PC-9 (cell line): ENCODE measurements at regions of chr6 and their contacts with region 1.

Region 1: DNA sequence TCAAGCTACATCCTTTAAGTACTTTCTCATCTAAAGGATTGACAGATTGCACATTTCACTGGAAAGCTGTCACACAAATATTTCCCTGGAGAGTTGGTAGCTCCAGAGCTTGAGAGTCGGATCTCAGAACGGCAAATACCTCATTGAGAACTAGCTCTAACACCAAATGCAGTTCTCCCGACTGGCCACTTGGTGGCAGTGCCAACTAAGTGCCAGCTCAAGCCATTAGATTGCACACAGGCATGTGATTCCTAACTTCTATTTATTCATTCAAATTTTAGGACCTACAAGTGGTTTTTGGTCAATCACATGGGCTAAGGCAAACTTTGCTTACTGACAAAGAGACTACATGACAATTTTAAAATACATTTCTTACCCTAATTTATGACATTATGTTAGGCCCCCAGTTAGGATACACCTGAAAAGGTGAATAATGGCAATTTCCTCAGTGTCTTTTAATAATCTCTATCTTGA is 7.9 kb upstream of the MCHR2 start:
- DNase-seq: peak; percentile 40 to 43
- H3K4me3 ChIP-seq: no peak overlapping the region
- H3K27ac ChIP-seq: no peak overlapping the region
- H3K4me1 ChIP-seq: no peaks in the 10 kb centered on the region
- H3K27me3 ChIP-seq: no peaks in the 10 kb centered on the region
- CTCF ChIP-seq: peak; percentile 97

Region 2: DNA sequence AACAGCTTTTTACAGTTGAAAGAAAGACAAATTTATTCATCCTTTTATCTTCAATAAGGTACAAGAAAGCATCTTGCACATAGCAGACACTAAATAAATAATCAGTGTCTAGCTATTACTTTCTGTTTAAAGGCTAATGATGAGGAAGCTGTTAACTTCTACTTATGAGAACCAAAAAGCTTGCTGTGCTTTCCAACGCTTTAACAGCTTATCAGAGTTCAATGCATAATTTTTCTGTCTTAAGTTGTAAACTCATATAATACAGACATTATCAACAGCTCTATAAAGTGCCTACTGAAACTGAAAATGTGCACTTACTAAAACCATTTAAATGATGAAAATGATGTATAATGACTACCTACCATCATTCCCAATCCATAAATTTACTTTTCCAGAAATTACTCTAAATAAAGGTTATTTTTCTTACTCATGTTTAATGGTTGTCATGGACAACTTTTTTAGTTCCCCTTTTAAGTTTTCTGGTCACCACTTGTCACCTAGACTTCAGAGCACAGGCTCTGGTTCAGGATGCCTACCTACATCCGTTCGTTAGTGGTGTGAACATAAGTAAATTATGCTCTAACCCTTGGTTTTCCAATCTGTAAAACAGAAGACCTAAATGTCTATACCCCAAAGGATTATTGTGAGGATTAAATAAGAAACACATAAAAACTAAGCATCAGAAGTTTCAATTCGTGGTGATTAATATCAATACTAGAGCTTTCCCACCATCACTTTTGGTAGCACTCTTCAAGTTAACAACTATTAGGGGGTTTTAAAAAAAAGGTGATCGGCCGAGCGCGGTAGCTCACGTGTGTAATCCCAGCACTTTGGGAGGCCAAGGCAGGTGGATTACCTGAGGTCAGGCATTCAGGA is 584.8 kb before region 1 on chr6:
- CTCF ChIA-PET with region 1: no interaction called
- POLR2A ChIA-PET with region 1: no interaction called
- intact Hi-C with region 1: no loop called
- DNase-seq: no peak
- H3K4me3 ChIP-seq: no peak overlapping the region
- H3K27ac ChIP-seq: no peak overlapping the region
- H3K4me1 ChIP-seq: no peaks in the 10 kb centered on the region
- H3K27me3 ChIP-seq: no peaks in the 10 kb centered on the region
- CTCF ChIP-seq: no peak

Region 3: DNA sequence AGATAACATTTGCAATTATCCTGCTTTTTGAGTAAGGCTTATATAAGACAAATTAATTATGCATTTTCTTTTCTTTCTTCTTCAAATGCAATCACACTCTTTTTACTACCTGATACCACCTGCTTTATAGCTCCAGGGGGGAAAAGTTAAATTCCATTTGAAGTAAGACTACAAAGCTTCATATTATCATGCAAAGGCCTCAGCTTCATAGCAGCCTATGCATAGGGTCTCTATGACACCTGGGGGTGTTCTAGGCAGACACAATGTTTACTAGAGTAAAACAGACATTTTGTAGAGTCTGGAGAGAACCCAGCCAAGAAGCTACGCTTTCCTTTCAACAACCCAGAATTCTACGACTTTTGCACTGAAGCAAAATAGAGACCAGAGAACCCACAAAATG is 155.9 kb before region 1 on chr6:
- CTCF ChIA-PET with region 1: no interaction called
- POLR2A ChIA-PET with region 1: no interaction called
- intact Hi-C with region 1: no loop called
- DNase-seq: no peak
- H3K4me3 ChIP-seq: no peak overlapping the region
- H3K27ac ChIP-seq: no peak overlapping the region
- H3K4me1 ChIP-seq: no peaks in the 10 kb centered on the region
- H3K27me3 ChIP-seq: no peaks in the 10 kb centered on the region
- CTCF ChIP-seq: no peak

Region 4: DNA sequence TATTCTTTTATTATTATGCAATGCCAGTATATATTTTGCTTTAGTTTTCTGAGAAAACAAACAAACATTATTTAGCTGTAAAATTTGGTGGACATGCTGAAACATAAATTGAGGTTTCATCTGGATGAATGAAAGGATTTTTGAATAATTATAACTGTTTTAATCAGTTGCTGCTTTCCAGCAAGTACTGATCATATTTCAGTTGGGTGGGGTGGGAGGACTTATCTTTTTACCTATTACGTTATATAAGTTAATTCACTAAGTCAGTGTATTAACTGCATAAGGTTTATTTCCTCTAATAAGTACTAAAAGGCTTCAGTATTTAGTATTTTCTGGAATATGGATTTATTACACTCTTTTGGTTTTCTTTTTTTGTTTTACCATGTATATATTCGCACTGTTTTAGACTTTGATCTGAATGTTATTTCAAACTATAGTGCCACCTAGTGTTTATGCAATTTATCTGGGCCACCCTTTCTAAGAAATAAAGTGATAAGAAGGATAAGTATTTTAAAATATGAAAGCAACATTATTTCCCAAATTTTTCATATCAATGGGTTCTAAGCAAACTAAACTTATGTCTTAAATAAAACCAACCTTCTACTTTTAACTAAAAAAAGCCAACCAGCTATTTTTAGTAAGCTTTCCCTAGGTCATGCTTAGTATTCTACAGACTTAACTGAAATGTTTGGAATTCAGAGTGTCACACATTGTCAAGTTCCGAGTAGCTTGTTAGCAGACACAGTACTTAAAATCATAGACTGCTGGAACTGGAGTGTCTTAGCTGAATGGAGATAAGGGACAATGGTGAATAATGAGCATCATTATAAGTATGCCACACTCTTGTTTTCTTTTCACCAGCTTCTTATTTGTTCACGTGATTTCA is 97.5 kb after region 1 on chr6:
- CTCF ChIA-PET with region 1: interaction called, 7 read pairs
- POLR2A ChIA-PET with region 1: no interaction called
- intact Hi-C with region 1: loop called (anchors 1 kb)
- DNase-seq: no peak
- H3K4me3 ChIP-seq: no peak overlapping the region
- H3K27ac ChIP-seq: no peak overlapping the region
- H3K4me1 ChIP-seq: no peaks in the 10 kb centered on the region
- H3K27me3 ChIP-seq: no peaks in the 10 kb centered on the region
- CTCF ChIP-seq: peak; percentile 80

Region 5: GRCh38 chr6:100664274-100665040 is 662.5 kb after region 1 on chr6:
- CTCF ChIA-PET with region 1: no interaction called
- POLR2A ChIA-PET with region 1: no interaction called
- intact Hi-C with region 1: loop called (anchors 1 kb)
- DNase-seq: no peak
- H3K4me3 ChIP-seq: no peak overlapping the region
- H3K27ac ChIP-seq: peak overlapping the region; percentile 69; the same call in 1 of the 2 replicates
- H3K4me1 ChIP-seq: peaks cover 14% of the 10 kb centered on the region
- H3K27me3 ChIP-seq: no peaks in the 10 kb centered on the region
- CTCF ChIP-seq: peak; percentile 82

Region 6: DNA sequence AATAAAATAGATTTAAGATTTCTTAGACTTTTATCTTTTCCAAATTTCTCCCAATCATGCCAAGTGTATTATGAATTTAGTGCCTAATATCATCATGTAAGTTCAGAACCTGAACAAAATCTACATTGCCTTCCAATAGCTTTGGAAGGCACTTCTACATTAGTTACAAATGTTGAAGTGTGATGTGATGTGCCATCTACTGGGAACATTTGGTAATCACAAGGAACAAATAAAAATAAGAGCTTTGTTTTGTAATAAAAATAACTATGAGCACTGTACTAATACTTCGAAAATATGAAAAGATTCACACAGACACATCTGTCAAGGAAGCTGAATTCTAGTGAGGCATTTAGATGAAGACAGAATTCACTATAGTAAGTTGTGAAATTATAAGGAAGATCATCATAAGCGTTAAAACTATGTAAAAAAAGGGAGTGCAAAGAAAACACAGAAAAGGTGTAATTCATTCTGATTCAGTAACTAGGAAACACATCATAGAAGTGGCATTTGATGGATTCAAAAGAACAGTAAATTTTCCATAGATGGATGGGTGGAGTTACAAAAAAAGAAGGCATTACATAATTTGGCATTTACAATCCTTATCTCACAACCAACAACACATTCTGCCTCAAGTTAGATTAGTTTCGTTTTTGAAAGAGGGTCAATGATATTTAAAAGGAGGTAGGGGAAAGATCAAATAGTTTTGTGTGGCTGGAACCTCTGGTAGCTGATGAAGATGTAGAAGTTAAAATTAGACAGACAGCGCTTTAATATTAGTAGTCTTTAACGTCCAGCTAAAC is 718.1 kb after region 1 on chr6:
- CTCF ChIA-PET with region 1: interaction called, 3 read pairs
- POLR2A ChIA-PET with region 1: no interaction called
- intact Hi-C with region 1: loop called (anchors 5 kb)
- DNase-seq: no peak
- H3K4me3 ChIP-seq: no peak overlapping the region
- H3K27ac ChIP-seq: no peak overlapping the region
- H3K4me1 ChIP-seq: 0 out of 2 replicates have a peak, but pooled peaks cover 5% of the 10 kb centered on the region
- H3K27me3 ChIP-seq: no peaks in the 10 kb centered on the region
- CTCF ChIP-seq: peak; percentile 75